Endothelial cell of umbilical vein (primary cell): ENCODE measurements at regions of chr21 and their contacts with region 1.

Region 1: DNA sequence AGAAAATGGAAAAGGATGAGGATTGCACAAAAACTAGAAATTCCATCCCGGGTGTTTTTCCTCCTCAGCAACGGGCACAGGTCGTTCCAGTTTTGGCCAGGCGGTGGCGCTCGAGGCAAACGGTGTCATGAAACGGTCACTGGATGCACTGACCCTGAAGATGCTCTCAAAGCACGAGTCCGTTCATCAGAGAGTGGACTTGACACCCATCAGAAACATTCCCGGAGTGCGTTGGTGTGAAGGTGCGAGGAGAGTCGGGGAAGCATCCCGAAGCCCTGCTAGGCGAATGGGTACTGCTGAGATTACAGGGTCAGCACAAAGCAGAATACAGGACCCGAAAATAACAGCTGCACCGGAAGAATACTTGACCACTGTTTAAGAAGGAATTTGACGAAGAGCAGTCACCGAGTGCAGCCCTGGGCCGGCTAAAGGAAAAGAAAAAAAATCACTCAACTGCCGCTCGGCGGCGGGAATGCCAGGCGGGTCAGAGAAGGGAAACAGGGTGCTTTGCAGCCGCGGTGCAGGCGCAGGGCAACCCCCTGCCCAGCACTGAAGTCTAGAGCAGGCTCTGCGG is 71.7 kb upstream of the ETS2 start:
- DNase-seq: peak; percentile 87
- H3K4me3 ChIP-seq: peak overlapping the region in 2 of 3 experiments; percentile 1 to 31
- H3K27ac ChIP-seq: no peak overlapping the region
- H3K4me1 ChIP-seq: peaks cover 9% of the 10 kb centered on the region
- H3K27me3 ChIP-seq: peaks cover 3% of the 10 kb centered on the region in 2 experiments
- CTCF ChIP-seq: peak; percentile 91 to 94
- POLR2A ChIP-seq: no peak

Region 2: GRCh38 chr21:38505654-38506515 is 228.2 kb before region 1 on chr21:
- CTCF ChIA-PET with region 1: interaction called, 5 read pairs
- POLR2A ChIA-PET with region 1: no interaction called
- dilution Hi-C with region 1: no loop called
- intact Hi-C with region 1: loop called (anchors 1 kb)
- DNase-seq: peak; percentile 93
- H3K4me3 ChIP-seq: peak overlapping the region; percentile 7 to 93 (median 43)
- H3K27ac ChIP-seq: peak overlapping the region; percentile 97
- H3K4me1 ChIP-seq: peaks cover 48% of the 10 kb centered on the region
- H3K27me3 ChIP-seq: no peaks in the 10 kb centered on the region
- CTCF ChIP-seq: peak; percentile 62 to 65
- POLR2A ChIP-seq: peak; percentile 45

Region 3: DNA sequence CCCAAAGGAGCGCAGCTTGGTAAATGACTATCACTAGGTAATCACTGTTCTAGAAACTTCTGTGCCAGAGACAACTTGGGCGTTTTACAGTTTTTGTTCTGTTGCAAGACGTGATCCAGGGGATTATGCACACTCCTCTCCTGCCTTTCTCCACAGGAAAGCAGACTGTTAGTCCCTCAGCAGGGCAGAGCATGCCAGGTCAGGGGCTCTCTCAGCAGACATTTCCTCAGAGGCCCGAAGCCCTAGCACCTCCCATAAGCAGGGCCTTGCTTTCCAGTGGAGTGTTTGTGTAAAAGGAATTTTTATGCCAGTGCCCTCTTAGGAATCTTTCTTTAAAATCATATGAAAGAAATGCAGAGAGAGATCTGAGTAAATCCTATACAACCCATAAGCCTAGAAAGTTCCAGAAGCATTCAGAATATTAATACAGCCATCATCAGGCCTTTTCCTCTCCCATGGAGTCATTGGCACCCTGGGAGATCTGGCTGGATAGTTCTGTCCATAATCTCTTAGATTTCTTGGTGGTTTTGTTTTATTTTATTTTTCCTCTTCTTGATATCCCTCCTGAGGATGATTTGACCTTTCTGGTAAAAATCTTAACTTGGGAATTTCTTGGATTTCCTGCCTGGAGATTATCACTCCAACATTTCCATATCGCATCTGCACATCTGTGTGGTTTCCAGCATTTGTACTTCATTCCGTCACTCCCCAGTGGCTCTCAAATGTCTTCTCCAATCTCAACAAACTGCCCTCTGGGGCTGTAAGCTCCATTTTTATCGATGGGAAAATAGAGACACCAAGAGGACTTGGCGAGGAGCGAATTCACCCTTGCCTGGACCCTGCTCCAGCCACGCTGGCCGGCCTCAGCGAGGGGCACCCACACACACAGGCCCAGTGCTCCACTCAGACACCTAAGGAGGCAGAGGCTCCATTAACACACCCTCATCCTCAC is 333.0 kb after region 1 on chr21:
- CTCF ChIA-PET with region 1: no interaction called
- POLR2A ChIA-PET with region 1: no interaction called
- dilution Hi-C with region 1: no loop called
- intact Hi-C with region 1: loop called (anchors 1 kb)
- DNase-seq: peak; percentile 83
- H3K4me3 ChIP-seq: no peak overlapping the region
- H3K27ac ChIP-seq: peak overlapping the region; percentile 6
- H3K4me1 ChIP-seq: peaks cover 26% of the 10 kb centered on the region
- H3K27me3 ChIP-seq: peaks cover 0 to 4% of the 10 kb centered on the region in 2 experiments
- CTCF ChIP-seq: no peak
- POLR2A ChIP-seq: no peak

Region 4: DNA sequence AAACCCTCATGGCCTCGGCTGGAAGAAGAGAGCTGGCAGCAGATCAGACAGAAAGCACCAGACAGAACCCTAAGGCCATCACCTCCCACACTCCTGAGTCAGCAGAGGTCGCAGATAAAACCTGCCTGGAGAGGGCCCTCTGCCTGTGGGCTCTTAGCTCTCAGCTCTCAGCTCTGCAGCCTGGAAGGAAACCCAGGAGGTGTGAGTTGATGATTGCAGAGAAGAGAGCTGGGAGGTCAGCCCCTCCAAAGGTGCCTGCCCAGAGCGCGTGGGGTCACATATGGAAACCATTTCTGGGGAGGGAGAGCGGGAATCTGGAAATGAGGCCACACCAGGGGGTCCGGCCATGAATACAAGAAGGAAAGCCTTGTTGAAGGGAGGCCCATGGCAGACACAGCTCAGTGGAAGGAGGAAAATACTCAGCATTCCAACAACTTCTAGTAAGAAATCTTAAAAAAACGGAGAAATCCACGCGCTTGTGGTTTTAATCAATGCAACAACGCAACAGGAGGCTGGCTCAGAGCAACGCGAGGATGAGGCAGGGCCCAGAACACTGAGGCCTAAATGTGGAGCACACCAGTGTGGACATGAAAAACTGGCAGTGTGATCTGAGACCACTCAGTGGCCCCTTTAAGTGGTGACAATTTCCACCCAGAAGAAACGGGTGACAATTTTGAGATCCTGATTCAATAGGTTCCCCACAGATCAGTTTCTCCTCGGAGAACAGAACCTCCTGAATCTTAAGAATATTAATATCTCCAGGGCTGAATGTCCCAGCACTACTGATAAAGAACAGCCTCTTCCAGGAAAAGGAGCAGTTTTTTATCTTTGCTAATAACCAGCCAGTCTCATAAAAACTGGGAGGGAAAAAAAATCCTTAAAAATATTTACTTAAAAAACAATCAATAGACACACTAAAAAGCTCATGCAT is 403.5 kb after region 1 on chr21:
- CTCF ChIA-PET with region 1: interaction called, 82 read pairs
- POLR2A ChIA-PET with region 1: no interaction called
- dilution Hi-C with region 1: no loop called
- intact Hi-C with region 1: loop called (anchors 1 kb)
- DNase-seq: no peak
- H3K4me3 ChIP-seq: no peak overlapping the region
- H3K27ac ChIP-seq: no peak overlapping the region
- H3K4me1 ChIP-seq: no peaks in the 10 kb centered on the region
- H3K27me3 ChIP-seq: no peaks in the 10 kb centered on the region
- CTCF ChIP-seq: no peak
- POLR2A ChIP-seq: no peak

Region 5: GRCh38 chr21:39175154-39175553 is 441.1 kb after region 1 on chr21:
- CTCF ChIA-PET with region 1: interaction called, 4 read pairs
- POLR2A ChIA-PET with region 1: no interaction called
- dilution Hi-C with region 1: loop called (anchors 25 kb)
- intact Hi-C with region 1: loop called (anchors 1 kb)
- DNase-seq: peak; percentile 44
- H3K4me3 ChIP-seq: no peak overlapping the region
- H3K27ac ChIP-seq: no peak overlapping the region
- H3K4me1 ChIP-seq: peaks cover 10% of the 10 kb centered on the region
- H3K27me3 ChIP-seq: no peaks in the 10 kb centered on the region
- CTCF ChIP-seq: peak in 1 of 2 donors; percentile 13
- POLR2A ChIP-seq: no peak